ENCODE measurements at regions of chr21 and their contacts with region 1.

Region 1: GRCh38 chr21:17819114-17819876 is at the start of gene C21orf91:
- DNase-seq: peak; percentile 79
- ATAC-seq: peak; percentile 89
- H3K4me3 ChIP-seq: peak within 1 kb of the TSS; percentile 92
- H3K27ac ChIP-seq: peak within 1 kb of the TSS; percentile 98
- H3K4me1 ChIP-seq: peaks cover 12% of the 10 kb centered on the region
- H3K27me3 ChIP-seq: no peaks in the 10 kb centered on the region
- CTCF ChIP-seq: no peak
- EP300 ChIP-seq: peak in 1 of 2 experiments; percentile 67; a peak in 2 of 4 replicates
- POLR2A ChIP-seq: peak; percentile 96
- RAD21 ChIP-seq: no peak
- polyA plus RNA-seq, gene C21orf91: 9.3 to 14.4 TPM

Region 2: DNA sequence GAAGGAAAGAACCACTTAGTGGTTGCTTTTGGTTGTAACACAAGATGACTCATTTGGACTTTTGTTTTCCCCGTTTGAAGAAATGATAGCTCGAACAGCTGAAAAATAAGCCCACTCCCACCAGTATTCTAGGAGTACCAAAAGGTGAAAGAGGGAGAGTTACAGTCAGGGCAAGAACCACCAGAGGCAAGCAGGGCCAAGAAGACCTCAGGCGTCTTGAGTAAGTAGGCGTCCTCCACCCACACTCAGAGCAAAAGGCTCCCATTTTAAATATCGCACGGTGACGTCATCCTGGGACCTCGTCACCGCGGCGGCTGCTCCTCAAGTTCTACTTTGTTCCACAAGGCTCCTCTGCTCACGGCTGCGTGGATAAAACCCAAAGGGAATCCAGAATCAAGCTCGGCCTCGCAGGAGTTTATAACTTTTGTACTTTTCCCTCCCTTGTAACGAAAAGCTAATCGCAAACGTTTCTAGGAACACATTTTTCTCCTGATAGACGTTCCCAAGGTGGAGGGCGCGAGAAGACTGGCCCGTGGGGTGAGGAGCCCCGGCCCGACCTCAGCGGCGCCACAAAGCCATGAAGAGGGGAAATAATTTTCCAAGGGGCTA is 207.8 kb before region 1 on chr21:
- CTCF ChIA-PET with region 1: interaction called, 3 read pairs
- POLR2A ChIA-PET with region 1: no interaction called
- RAD21 ChIA-PET with region 1: no interaction called
- SMC1A ChIA-PET with region 1: interaction called, 4 read pairs
- in situ Hi-C with region 1: no loop called
- intact Hi-C with region 1: loop called (anchors 10 kb)
- DNase-seq: peak; percentile 59
- ATAC-seq: peak; percentile 68
- H3K4me3 ChIP-seq: peak overlapping the region; percentile 100
- H3K27ac ChIP-seq: peak overlapping the region; percentile 70
- H3K4me1 ChIP-seq: peaks cover 4% of the 10 kb centered on the region
- H3K27me3 ChIP-seq: no peaks in the 10 kb centered on the region
- CTCF ChIP-seq: no peak
- EP300 ChIP-seq: 0 out of 4 replicates have a peak, but pooled peaks have one; percentile 13 to 20
- POLR2A ChIP-seq: 0 out of 2 replicates have a peak, but pooled peaks have one; percentile 48
- RAD21 ChIP-seq: no peak

Region 3: GRCh38 chr21:17688912-17689874 is 130.1 kb before region 1 on chr21:
- CTCF ChIA-PET with region 1: interaction called, 12 read pairs
- POLR2A ChIA-PET with region 1: no interaction called
- RAD21 ChIA-PET with region 1: interaction called, 8 read pairs
- SMC1A ChIA-PET with region 1: interaction called, 5 read pairs
- in situ Hi-C with region 1: no loop called
- intact Hi-C with region 1: no loop called
- DNase-seq: no peak
- ATAC-seq: no peak; the same call in 2 of the 3 replicates
- H3K4me3 ChIP-seq: no peak overlapping the region
- H3K27ac ChIP-seq: no peak overlapping the region
- H3K4me1 ChIP-seq: peaks cover 3% of the 10 kb centered on the region
- H3K27me3 ChIP-seq: no peaks in the 10 kb centered on the region
- CTCF ChIP-seq: peak; percentile 17 to 50 (median 23); a peak in 4 of 6 replicates
- EP300 ChIP-seq: no peak
- POLR2A ChIP-seq: no peak
- RAD21 ChIP-seq: peak; percentile 57

Region 4: DNA sequence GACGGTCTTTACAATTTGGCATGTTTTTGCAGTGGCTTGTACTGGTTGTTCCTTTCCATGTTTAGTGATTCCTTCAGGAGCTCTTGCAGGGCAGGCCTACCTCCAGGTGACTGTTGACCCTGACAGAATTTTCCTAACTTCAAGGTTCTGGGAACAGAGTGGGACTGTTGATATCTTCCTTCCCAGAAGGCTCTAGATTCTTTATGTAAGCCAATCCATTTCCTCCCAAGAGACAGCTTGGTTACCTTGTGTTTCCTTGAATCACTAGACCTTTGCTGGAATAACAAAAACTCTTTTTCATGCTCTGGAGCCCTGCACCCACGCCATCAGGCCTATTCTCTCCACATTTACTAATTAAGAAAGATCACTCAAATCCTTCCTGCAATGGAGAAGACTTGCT is 67.1 kb before region 1 on chr21:
- CTCF ChIA-PET with region 1: no interaction called
- POLR2A ChIA-PET with region 1: no interaction called
- RAD21 ChIA-PET with region 1: no interaction called
- SMC1A ChIA-PET with region 1: no interaction called
- in situ Hi-C with region 1: no loop called
- intact Hi-C with region 1: no loop called
- DNase-seq: no peak
- ATAC-seq: no peak
- H3K4me3 ChIP-seq: no peak overlapping the region
- H3K27ac ChIP-seq: no peak overlapping the region
- H3K4me1 ChIP-seq: no peaks in the 10 kb centered on the region
- H3K27me3 ChIP-seq: no peaks in the 10 kb centered on the region
- CTCF ChIP-seq: no peak
- EP300 ChIP-seq: no peak
- POLR2A ChIP-seq: no peak
- RAD21 ChIP-seq: no peak

Region 5: GRCh38 chr21:17802572-17802971 is 16.7 kb before region 1 on chr21:
- CTCF ChIA-PET with region 1: interaction called, 6 read pairs
- POLR2A ChIA-PET with region 1: interaction called, 6 read pairs
- RAD21 ChIA-PET with region 1: interaction called, 14 read pairs
- SMC1A ChIA-PET with region 1: interaction called, 37 read pairs
- in situ Hi-C with region 1: no loop called
- intact Hi-C with region 1: no loop called
- DNase-seq: no peak
- ATAC-seq: no peak
- H3K4me3 ChIP-seq: no peak overlapping the region
- H3K27ac ChIP-seq: no peak overlapping the region
- H3K4me1 ChIP-seq: no peaks in the 10 kb centered on the region
- H3K27me3 ChIP-seq: no peaks in the 10 kb centered on the region
- CTCF ChIP-seq: no peak
- EP300 ChIP-seq: no peak
- POLR2A ChIP-seq: no peak
- RAD21 ChIP-seq: no peak

Region 6: GRCh38 chr21:17848228-17848627 is 28.9 kb after region 1 on chr21:
- CTCF ChIA-PET with region 1: interaction called, 3 read pairs
- POLR2A ChIA-PET with region 1: interaction called, 11 read pairs
- RAD21 ChIA-PET with region 1: interaction called, 9 read pairs
- SMC1A ChIA-PET with region 1: interaction called, 8 read pairs
- in situ Hi-C with region 1: no loop called
- intact Hi-C with region 1: loop called (anchors 2 kb)
- DNase-seq: peak; percentile 84
- ATAC-seq: peak; percentile 98
- H3K4me3 ChIP-seq: no peak overlapping the region
- H3K27ac ChIP-seq: peak overlapping the region; percentile 29; the same call in 1 of the 2 replicates
- H3K4me1 ChIP-seq: peaks cover 17% of the 10 kb centered on the region; the same call in 1 of the 2 replicates
- H3K27me3 ChIP-seq: no peaks in the 10 kb centered on the region
- CTCF ChIP-seq: no peak
- EP300 ChIP-seq: peak; percentile 74 to 95; a peak in 2 of 4 replicates
- POLR2A ChIP-seq: no peak
- RAD21 ChIP-seq: peak; percentile 13; the same call in 1 of the 2 replicates

Measured in GM12878 (cell line).